Activated CD4-positive, alpha-beta T cell treated with anti-CD3 and anti-CD28 coated beads for 36 hours (primary cell): ENCODE measurements at regions of chr13 and their contacts with region 1.

Region 1: DNA sequence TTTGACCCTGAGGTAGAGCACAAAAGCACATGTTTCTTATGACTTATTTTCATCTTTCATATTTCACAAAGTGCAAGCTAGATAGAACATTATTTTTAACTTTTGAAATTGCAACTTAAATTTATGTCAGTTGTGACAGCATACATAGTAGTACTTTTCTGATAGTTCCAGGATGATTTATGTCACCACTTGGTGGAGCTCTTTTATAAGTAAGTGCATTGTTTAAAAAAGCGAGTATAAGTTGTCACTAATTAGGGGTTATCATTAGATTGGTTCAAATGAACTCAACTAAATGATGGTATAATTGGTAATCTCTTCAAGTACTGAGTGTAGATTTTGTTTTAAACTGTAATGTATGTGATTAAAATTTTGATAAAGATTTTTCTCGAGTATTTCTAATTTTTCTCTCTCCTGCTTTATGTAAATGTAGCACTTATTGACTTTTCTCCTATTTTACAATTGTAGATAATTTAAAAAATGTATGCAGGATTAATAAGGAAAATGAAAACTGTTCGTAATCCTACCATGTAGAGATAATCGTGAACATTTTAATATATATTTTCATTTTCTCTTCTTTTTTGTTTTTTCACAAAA is 31.1 kb downstream of the RB1 start:
- DNase-seq: no peak
- ATAC-seq: no peak
- H3K4me3 Mint-ChIP-seq: no peak overlapping the region
- H3K27ac Mint-ChIP-seq: no peak overlapping the region
- H3K4me1 Mint-ChIP-seq: peaks cover 7% of the 10 kb centered on the region
- H3K27me3 Mint-ChIP-seq: no peaks in the 10 kb centered on the region

Region 2: DNA sequence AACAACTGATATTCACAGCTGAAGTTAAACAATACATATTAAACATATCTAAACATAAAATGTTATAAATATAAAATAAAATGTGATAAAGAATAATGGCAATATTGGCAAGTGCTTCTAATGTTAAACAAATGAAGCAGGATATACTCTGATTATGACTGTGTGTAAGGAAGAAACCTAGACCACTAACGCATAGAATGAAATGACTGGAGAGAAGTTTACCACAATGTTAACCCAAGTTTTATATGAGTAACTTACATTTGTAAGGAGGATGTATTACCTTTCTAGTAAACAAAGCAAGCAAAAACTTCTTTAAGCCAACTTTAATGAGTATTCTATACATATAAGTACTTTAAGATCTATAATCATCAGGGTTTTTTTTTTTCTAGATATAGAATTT is 12.0 kb after region 1 on chr13:
- CTCF ChIA-PET with region 1: interaction called, 12 read pairs
- POLR2A ChIA-PET with region 1: no interaction called
- intact Hi-C with region 1: no loop called
- DNase-seq: no peak
- ATAC-seq: peak; percentile 64
- H3K4me3 Mint-ChIP-seq: no peak overlapping the region
- H3K27ac Mint-ChIP-seq: no peak overlapping the region
- H3K4me1 Mint-ChIP-seq: no peaks in the 10 kb centered on the region
- H3K27me3 Mint-ChIP-seq: no peaks in the 10 kb centered on the region

Region 3: GRCh38 chr13:48505597-48506091 is 171.0 kb after region 1 on chr13:
- CTCF ChIA-PET with region 1: no interaction called
- POLR2A ChIA-PET with region 1: no interaction called
- intact Hi-C with region 1: loop called in 1 of 2 experiments (anchors 10 kb)
- DNase-seq: peak; percentile 64
- ATAC-seq: peak; percentile 71
- H3K4me3 Mint-ChIP-seq: peak overlapping the region; percentile 22
- H3K27ac Mint-ChIP-seq: peak overlapping the region; percentile 85
- H3K4me1 Mint-ChIP-seq: peaks cover 57% of the 10 kb centered on the region
- H3K27me3 Mint-ChIP-seq: no peaks in the 10 kb centered on the region

Region 4: GRCh38 chr13:48571126-48571913 is 236.7 kb after region 1 on chr13:
- CTCF ChIA-PET with region 1: interaction called, 127 read pairs
- POLR2A ChIA-PET with region 1: no interaction called
- intact Hi-C with region 1: no loop called
- DNase-seq: no peak
- ATAC-seq: no peak
- H3K4me3 Mint-ChIP-seq: no peak overlapping the region
- H3K27ac Mint-ChIP-seq: no peak overlapping the region
- H3K4me1 Mint-ChIP-seq: peaks cover 9% of the 10 kb centered on the region
- H3K27me3 Mint-ChIP-seq: peaks cover 26% of the 10 kb centered on the region

Region 5: DNA sequence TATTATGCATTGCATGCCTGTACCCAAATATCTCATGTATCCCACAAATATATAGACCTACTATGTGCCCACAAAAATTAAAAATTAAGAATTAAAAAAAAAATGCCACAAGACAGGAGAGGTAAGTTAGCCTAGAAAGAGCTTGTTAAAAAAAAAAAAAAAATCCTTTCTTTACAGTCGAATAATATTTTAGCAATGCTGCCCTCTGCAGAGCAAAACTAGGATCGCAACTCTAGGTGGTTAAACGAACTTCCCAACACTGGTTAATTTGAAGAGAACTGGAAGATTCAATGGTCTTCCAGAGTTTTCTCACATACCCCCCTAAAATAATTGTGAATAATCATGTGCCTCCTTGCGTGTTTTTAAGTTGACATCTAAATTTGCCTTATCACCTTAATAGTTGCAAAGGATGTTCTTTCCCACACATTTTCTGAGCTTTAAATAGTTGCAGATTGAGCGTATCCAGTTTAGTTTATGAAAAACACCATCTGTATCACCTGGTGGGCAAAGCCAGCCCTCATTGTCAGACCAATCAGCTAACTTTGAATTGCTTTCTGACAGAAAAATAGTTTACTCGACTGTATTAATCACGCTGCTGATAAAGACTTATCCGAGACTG is 245.7 kb after region 1 on chr13:
- CTCF ChIA-PET with region 1: interaction called, 127 read pairs
- POLR2A ChIA-PET with region 1: no interaction called
- intact Hi-C with region 1: loop called (anchors 1 kb)
- DNase-seq: peak; percentile 81
- ATAC-seq: no peak
- H3K4me3 Mint-ChIP-seq: no peak overlapping the region
- H3K27ac Mint-ChIP-seq: no peak overlapping the region
- H3K4me1 Mint-ChIP-seq: no peaks in the 10 kb centered on the region
- H3K27me3 Mint-ChIP-seq: peaks cover 16% of the 10 kb centered on the region

Region 6: GRCh38 chr13:48731957-48732569 is 397.4 kb after region 1 on chr13:
- CTCF ChIA-PET with region 1: interaction called, 6 read pairs
- POLR2A ChIA-PET with region 1: no interaction called
- intact Hi-C with region 1: loop called in 1 of 2 experiments (anchors 5 kb)
- DNase-seq: peak; percentile 80
- ATAC-seq: peak; percentile 81
- H3K4me3 Mint-ChIP-seq: peak overlapping the region; percentile 37
- H3K27ac Mint-ChIP-seq: no peak overlapping the region
- H3K4me1 Mint-ChIP-seq: peaks cover 14% of the 10 kb centered on the region
- H3K27me3 Mint-ChIP-seq: no peaks in the 10 kb centered on the region